SK-N-SH (cell line): ENCODE measurements at regions of chr5 and their contacts with region 1.

Region 1: GRCh38 chr5:83595215-83595614 is 123.7 kb downstream of the VCAN start:
- DNase-seq: no peak
- H3K4me3 ChIP-seq: no peak overlapping the region
- H3K27ac ChIP-seq: no peak overlapping the region
- H3K4me1 ChIP-seq: no peaks in the 10 kb centered on the region
- H3K27me3 ChIP-seq: no peaks in the 10 kb centered on the region
- CTCF ChIP-seq: peak; percentile 28; the same call in 1 of the 2 replicates
- EP300 ChIP-seq: no peak
- RAD21 ChIP-seq: no peak

Region 2: GRCh38 chr5:83608122-83608521 is 12.9 kb after region 1 on chr5:
- CTCF ChIA-PET with region 1: interaction called, 14 read pairs
- POLR2A ChIA-PET with region 1: no interaction called
- DNase-seq: peak; percentile 54
- H3K4me3 ChIP-seq: no peak overlapping the region; a peak in 1 of 4 replicates
- H3K27ac ChIP-seq: no peak overlapping the region
- H3K4me1 ChIP-seq: no peaks in the 10 kb centered on the region
- H3K27me3 ChIP-seq: no peaks in the 10 kb centered on the region; the same call in 1 of the 2 replicates
- CTCF ChIP-seq: peak; percentile 53
- EP300 ChIP-seq: no peak
- RAD21 ChIP-seq: peak; percentile 67